Heart left ventricle (tissue), 16 donors: ENCODE measurements at regions of chr1 and their contacts with region 1.

Region 1: GRCh38 chr1:102191723-102192122 is 195.0 kb upstream of the OLFM3 start:
- DNase-seq: peak in 2 of 5 donors; percentile 8 to 25
- ATAC-seq: peak in 3 of 4 donors; percentile 67 to 85 (median 74)
- H3K4me3 ChIP-seq: no peak overlapping the region
- H3K27ac ChIP-seq: no peak overlapping the region
- H3K4me1 ChIP-seq: no peaks in the 10 kb centered on the region
- H3K27me3 ChIP-seq: no peaks in the 10 kb centered on the region
- CTCF ChIP-seq: peak in 11 of 12 donors; percentile 5 to 57 (median 34)
- POLR2A ChIP-seq: no peak

Region 2: DNA sequence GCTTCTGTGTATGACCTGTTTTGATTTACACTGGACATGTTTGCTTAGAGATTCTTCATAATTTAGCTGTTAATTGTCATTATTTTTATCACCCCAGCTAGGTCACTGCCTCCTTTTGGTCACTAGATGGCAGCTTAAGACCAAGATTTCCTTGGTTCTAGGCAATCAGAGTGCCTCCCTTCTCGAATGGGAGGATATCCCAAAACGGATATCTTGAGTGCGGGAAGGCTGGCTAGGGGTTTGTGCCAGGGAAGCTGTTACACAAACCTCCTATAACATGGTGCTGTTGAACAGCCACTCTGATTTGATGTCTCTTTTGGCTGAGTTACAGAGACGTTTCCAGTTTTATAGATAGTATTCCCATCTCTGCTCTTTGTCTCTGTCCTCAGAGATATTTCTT is 671.4 kb before region 1 on chr1:
- intact Hi-C with region 1: loop called in 1 of 10 experiments (anchors 5 kb)
- DNase-seq: no peak
- ATAC-seq: peak in 2 of 4 donors; percentile 62 to 63
- H3K4me3 ChIP-seq: no peak overlapping the region
- H3K27ac ChIP-seq: no peak overlapping the region
- H3K4me1 ChIP-seq: no peaks in the 10 kb centered on the region
- H3K27me3 ChIP-seq: no peaks in the 10 kb centered on the region
- CTCF ChIP-seq: peak; percentile 42 to 67 (median 54)
- POLR2A ChIP-seq: no peak

Region 3: DNA sequence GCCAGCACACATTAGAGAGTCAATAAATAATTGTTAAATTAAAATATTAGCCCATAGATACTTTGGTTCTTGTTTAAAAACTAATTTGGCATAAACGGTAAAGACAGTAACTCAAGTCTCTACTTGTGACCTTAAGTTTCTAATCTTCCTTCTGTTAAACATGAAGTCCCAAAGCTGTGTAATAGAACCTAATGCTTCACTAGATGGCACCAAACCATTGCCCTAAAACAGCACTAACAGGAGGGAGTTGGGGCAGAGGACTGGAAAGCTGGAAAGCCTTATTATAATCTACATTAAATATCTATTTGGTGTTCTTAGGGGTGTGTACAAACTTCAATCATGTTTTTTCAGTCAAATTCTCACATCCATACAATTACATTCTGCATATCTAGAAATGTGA is 371.7 kb before region 1 on chr1:
- intact Hi-C with region 1: loop called (anchors 1 to 5 kb)
- DNase-seq: no peak
- ATAC-seq: peak in 3 of 4 donors; percentile 53 to 76 (median 61)
- H3K4me3 ChIP-seq: no peak overlapping the region
- H3K27ac ChIP-seq: no peak overlapping the region
- H3K4me1 ChIP-seq: no peaks in the 10 kb centered on the region
- H3K27me3 ChIP-seq: no peaks in the 10 kb centered on the region
- CTCF ChIP-seq: peak in 11 of 12 donors; percentile 26 to 61 (median 50)
- POLR2A ChIP-seq: no peak

Region 4: DNA sequence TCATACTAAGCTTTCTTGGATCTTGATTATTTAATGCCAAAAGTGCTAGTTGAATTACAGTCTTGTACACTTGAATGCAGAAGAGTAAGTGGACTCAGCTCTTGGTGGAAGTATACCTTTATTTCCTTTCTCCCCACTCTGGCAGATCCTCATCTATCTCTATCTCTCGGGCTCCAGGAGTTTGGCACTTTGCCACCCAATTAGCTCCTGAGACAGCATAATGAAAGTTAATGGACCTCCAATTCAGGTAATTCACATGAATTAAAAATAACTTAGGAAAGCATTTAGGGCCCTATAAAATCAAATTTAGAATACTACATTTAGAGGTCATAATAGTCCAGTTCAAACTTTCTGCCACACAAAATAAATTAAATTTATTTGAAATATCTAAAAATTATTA is 262.4 kb before region 1 on chr1:
- intact Hi-C with region 1: loop called in 1 of 10 experiments (anchors 10 kb)
- DNase-seq: no peak
- ATAC-seq: no peak
- H3K4me3 ChIP-seq: no peak overlapping the region
- H3K27ac ChIP-seq: no peak overlapping the region
- H3K4me1 ChIP-seq: no peaks in the 10 kb centered on the region
- H3K27me3 ChIP-seq: no peaks in the 10 kb centered on the region
- CTCF ChIP-seq: no peak
- POLR2A ChIP-seq: no peak

Region 5: GRCh38 chr1:103387898-103388297 is 1196.2 kb after region 1 on chr1:
- intact Hi-C with region 1: no loop called
- DNase-seq: no peak
- ATAC-seq: no peak
- H3K4me3 ChIP-seq: no peak overlapping the region
- H3K27ac ChIP-seq: no peak overlapping the region
- H3K4me1 ChIP-seq: no peaks in the 10 kb centered on the region
- H3K27me3 ChIP-seq: no peaks in the 10 kb centered on the region
- CTCF ChIP-seq: no peak
- POLR2A ChIP-seq: no peak